Heart right ventricle (tissue), 16 donors: ENCODE measurements at regions of chr11 and their contacts with region 1.

Region 1: GRCh38 chr11:133821776-133822175 is 23.5 kb downstream of the SPATA19 start:
- DNase-seq: peak; percentile 41 to 54
- ATAC-seq: peak; percentile 46 to 79 (median 72)
- H3K4me3 ChIP-seq: no peak overlapping the region
- H3K27ac ChIP-seq: no peak overlapping the region
- H3K4me1 ChIP-seq: no peaks in the 10 kb centered on the region
- H3K27me3 ChIP-seq: peaks cover 0 to 16% (median 0%) of the 10 kb centered on the region in 7 donors
- CTCF ChIP-seq: peak; percentile 25 to 70 (median 65)

Region 2: GRCh38 chr11:133082851-133083488 is 738.8 kb before region 1 on chr11:
- intact Hi-C with region 1: loop called in 1 of 10 experiments (anchors 5 kb)
- DNase-seq: peak; percentile 28 to 75
- ATAC-seq: peak; percentile 88 to 95 (median 92)
- H3K4me3 ChIP-seq: peak overlapping the region; percentile 10 to 53 (median 43)
- H3K27ac ChIP-seq: no peak overlapping the region
- H3K4me1 ChIP-seq: peaks cover 0 to 6% (median 4%) of the 10 kb centered on the region in 9 donors
- H3K27me3 ChIP-seq: peaks cover 0 to 84% (median 68%) of the 10 kb centered on the region in 7 donors
- CTCF ChIP-seq: peak; percentile 54 to 97 (median 81)

Region 3: GRCh38 chr11:133134314-133135173 is 687.2 kb before region 1 on chr11:
- intact Hi-C with region 1: loop called in 3 of 10 experiments (anchors 5 to 10 kb)
- DNase-seq: peak; percentile 38 to 46
- ATAC-seq: peak in 7 of 8 donors; percentile 51 to 82 (median 73)
- H3K4me3 ChIP-seq: no peak overlapping the region
- H3K27ac ChIP-seq: no peak overlapping the region
- H3K4me1 ChIP-seq: peaks cover 0 to 15% (median 3%) of the 10 kb centered on the region in 9 donors
- H3K27me3 ChIP-seq: peaks cover 0 to 14% (median 0%) of the 10 kb centered on the region in 7 donors
- CTCF ChIP-seq: peak; percentile 75 to 94 (median 85)

Region 4: DNA sequence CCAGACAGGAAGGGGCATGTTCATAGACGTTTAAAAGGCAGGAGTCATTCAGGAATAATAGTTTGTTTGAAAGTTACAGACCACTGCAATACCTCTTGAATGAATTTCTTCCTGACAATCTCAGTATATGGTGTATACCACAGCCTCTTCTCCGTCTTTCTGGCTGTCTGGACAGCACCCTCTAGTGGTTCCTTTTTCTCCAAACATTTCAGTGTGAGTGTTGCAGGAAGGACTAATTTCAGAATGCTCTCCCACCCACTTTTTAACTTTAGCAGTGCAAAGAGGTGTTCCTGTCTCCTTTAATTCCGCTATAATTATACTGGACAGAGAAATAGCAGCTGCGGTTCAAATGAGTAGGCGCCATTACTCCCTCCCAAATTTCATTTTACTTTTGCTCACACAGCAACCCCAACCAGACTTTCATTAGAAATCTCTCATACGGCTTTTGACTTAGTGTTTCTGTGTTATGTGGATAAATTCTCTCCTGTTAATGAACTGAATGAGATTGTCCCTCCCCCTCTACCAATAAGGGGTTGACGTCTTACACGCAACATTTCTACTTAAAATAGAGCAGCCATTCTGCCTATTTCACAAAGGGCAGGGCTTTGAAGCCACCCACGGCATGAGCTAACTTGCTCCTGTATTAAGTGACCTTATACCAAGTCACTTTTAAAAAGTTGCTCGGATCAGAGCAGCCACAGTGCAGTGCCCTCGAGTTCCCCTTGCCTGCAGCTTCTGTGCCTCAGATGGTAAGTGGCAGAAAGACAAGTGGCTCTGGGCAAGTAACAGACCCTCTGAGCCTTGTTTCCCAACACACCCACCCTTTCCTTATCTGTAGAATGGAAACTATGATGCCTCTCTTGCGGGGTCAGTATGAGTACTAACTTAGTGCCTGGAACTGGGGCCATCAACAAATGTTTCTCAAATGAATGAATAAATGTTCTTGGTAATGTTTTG is 658.0 kb before region 1 on chr11:
- intact Hi-C with region 1: loop called in 2 of 10 experiments (anchors 5 to 10 kb)
- DNase-seq: peak in 1 of 2 donors; percentile 24
- ATAC-seq: peak; percentile 63 to 95 (median 78)
- H3K4me3 ChIP-seq: peak overlapping the region in 3 of 10 donors; percentile 2 to 26 (median 16)
- H3K27ac ChIP-seq: peak overlapping the region in 1 of 10 donors; percentile 31
- H3K4me1 ChIP-seq: peaks cover 0 to 7% (median 0%) of the 10 kb centered on the region in 9 donors
- H3K27me3 ChIP-seq: peaks cover 0 to 44% (median 6%) of the 10 kb centered on the region in 7 donors
- CTCF ChIP-seq: peak; percentile 48 to 80 (median 75)

Region 5: GRCh38 chr11:133619973-133620372 is 201.8 kb before region 1 on chr11:
- intact Hi-C with region 1: loop called in 3 of 10 experiments (anchors 5 to 10 kb)
- DNase-seq: no peak
- ATAC-seq: peak in 2 of 8 donors; percentile 50 to 59
- H3K4me3 ChIP-seq: no peak overlapping the region
- H3K27ac ChIP-seq: no peak overlapping the region
- H3K4me1 ChIP-seq: no peaks in the 10 kb centered on the region
- H3K27me3 ChIP-seq: peaks cover 0 to 14% (median 0%) of the 10 kb centered on the region in 7 donors
- CTCF ChIP-seq: peak in 7 of 9 donors; percentile 29 to 54 (median 33)

Region 6: GRCh38 chr11:133636711-133637355 is 184.9 kb before region 1 on chr11:
- intact Hi-C with region 1: loop called in 1 of 10 experiments (anchors 5 kb)
- DNase-seq: no peak
- ATAC-seq: no peak
- H3K4me3 ChIP-seq: no peak overlapping the region
- H3K27ac ChIP-seq: no peak overlapping the region
- H3K4me1 ChIP-seq: no peaks in the 10 kb centered on the region
- H3K27me3 ChIP-seq: peaks cover 0 to 10% (median 0%) of the 10 kb centered on the region in 7 donors
- CTCF ChIP-seq: no peak

Region 7: GRCh38 chr11:133681901-133682300 is 139.9 kb before region 1 on chr11:
- intact Hi-C with region 1: no loop called
- DNase-seq: no peak
- ATAC-seq: peak in 2 of 8 donors; percentile 30 to 56
- H3K4me3 ChIP-seq: no peak overlapping the region
- H3K27ac ChIP-seq: no peak overlapping the region
- H3K4me1 ChIP-seq: peaks cover 0 to 4% (median 0%) of the 10 kb centered on the region in 9 donors
- H3K27me3 ChIP-seq: peaks cover 0 to 32% (median 5%) of the 10 kb centered on the region in 7 donors
- CTCF ChIP-seq: peak in 1 of 9 donors; percentile 17